Breast epithelium (tissue), 4 donors: ENCODE measurements at regions of chr2 and their contacts with region 1.

Region 1: DNA sequence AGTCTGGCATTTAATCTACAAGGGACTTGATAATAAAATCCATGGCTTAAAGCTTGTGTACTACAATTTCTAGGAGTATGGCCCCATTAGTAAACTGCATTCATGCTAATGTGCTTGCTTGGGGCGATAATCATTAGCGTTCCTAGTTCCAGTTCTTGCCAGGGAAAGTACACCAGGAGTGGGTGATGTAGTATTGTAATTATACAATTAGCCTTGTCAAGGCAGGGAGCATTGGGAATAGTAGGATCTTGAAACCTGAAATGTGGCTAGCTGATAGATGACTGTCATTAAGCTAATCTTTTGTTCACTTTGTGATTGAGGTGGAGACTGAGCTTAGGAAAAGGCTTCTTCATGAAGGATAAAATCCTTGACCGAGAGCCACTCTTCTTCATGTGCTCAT is 989.2 kb downstream of the CPS1 start:
- DNase-seq: no peak
- H3K4me3 ChIP-seq: no peak overlapping the region
- H3K27ac ChIP-seq: no peak overlapping the region
- H3K4me1 ChIP-seq: no peaks in the 10 kb centered on the region
- H3K27me3 ChIP-seq: no peaks in the 10 kb centered on the region
- CTCF ChIP-seq: no peak
- POLR2A ChIP-seq: no peak

Region 2: DNA sequence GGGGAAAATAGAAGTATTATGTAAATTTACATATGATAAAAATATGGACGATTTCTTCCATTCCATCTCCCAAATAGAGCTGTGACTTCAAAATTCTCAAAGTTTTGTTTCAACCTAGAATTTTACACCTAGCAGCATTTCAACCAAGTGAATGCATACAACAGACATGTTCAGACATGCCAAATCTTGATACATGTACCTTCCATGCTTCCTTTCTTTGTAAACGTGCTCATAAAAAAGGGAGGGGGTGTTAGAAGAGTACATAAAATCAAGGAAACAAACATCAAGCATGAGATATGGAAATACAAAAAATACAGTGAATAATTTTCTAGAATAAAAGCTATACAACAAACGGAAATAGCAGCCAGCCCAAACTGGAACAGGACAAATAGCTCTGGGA is 18.9 kb after region 1 on chr2:
- intact Hi-C with region 1: no loop called
- DNase-seq: no peak
- H3K4me3 ChIP-seq: no peak overlapping the region
- H3K27ac ChIP-seq: no peak overlapping the region
- H3K4me1 ChIP-seq: no peaks in the 10 kb centered on the region
- H3K27me3 ChIP-seq: no peaks in the 10 kb centered on the region
- CTCF ChIP-seq: no peak
- POLR2A ChIP-seq: no peak

Region 3: DNA sequence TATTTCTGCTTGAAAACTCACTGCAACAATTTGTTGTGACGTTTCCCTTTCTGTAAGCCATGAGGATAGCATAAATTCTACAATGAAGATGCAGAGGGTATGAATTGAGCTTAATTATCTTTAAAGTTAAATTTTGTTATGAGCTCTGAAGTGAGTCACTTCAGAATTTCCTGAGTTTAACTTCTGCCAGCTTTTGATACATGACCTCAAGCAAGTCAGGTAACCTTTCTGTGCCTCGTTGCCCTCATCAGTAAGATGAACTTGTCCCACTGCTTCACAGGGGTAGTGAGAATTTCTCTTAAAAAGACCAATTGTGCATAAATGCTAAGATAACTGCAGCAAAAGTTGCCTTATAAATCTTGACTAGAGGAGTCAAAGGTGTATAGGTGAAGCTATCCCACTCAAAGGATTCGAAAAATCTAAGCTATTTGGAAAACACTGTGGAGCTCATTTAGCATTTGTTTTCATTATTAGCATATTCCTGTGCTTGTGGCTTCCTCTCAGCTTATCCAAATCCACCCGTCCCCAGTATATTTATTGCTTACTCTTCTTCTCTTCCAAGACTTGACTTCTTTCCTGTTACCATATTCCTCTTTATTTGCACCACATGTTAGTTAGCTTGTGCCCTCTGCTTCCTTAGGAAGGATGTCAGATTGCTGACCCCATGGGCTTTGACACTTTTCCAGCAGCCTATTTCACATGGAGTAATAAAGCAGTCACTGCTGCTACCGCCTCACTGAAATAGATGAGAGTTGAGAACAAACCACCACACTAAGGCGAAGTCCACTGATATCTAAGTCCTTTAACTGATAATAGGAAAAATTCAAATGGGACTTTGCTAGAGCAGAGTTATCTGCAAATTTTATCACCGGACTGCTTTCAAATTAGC is 564.5 kb after region 1 on chr2:
- intact Hi-C with region 1: loop called (anchors 10 kb)
- DNase-seq: no peak
- H3K4me3 ChIP-seq: no peak overlapping the region
- H3K27ac ChIP-seq: no peak overlapping the region
- H3K4me1 ChIP-seq: no peaks in the 10 kb centered on the region
- H3K27me3 ChIP-seq: no peaks in the 10 kb centered on the region
- CTCF ChIP-seq: no peak
- POLR2A ChIP-seq: no peak

Region 4: DNA sequence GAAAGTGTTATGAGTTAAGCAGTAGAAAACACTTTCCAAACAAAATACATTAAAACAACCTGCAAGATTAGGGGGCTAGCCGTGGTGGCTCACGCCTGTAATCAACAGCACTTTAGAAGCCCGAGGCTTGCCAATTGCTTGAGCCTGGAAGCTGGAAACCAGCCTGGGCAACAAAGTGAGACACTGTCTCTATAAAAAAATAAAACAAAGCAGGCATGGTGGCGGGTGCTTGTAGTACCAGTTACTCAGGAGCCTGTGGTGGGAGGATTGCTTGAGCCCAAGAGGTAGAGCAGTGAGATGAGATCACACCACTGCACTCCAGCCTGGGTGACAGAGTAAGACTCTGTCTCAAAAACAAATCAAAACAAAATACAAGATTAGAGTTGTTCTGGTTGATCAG is 784.7 kb after region 1 on chr2:
- intact Hi-C with region 1: loop called (anchors 5 kb)
- DNase-seq: peak in 1 of 2 donors; percentile 18
- H3K4me3 ChIP-seq: no peak overlapping the region
- H3K27ac ChIP-seq: no peak overlapping the region
- H3K4me1 ChIP-seq: no peaks in the 10 kb centered on the region
- H3K27me3 ChIP-seq: no peaks in the 10 kb centered on the region
- CTCF ChIP-seq: no peak
- POLR2A ChIP-seq: no peak